Activated CD4-positive, alpha-beta T cell treated with anti-CD3 and anti-CD28 coated beads for 36 hours (primary cell): ENCODE measurements at regions of chr1 and their contacts with region 1.

Region 1: DNA sequence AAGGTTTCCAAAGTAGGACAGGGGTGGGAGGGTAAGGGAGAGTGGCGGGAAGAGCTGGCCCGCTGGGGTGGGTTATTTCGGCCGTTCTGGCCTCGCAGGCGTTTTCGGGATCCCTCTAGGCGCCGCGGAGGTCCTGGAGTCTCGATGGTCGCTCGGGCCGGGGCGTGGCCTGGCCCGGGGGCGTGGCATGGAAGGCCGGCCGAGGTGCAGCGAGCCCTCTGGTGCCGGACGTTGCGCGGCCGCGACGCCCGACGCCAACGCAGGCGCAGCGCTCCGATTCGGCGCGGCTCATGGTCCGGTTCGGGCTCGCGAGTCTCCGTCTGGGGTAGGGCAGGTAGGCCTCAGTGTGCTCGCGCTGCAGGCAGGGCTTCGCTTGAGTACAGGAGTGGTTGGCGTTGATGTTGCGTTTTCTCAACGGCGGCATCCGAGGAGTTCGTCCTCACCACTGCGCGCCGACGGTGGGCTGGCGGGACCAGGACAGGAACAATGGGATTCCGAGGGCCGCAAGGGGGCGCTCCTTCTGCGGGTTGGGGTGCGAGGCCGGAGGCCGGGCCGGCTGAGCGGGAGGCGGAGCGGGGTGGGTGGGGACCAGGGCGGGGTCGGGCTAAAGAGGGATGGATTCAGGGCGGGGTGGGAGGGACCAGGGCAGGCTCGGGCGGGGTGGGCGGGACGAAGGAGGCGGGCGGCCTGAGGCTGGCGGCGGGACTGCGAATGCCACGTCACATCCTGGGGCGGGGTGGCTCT is at the start of gene PGBD2:
- DNase-seq: peak; percentile 98
- ATAC-seq: peak; percentile 87
- H3K4me3 Mint-ChIP-seq: peak within 1 kb of the TSS; percentile 79
- H3K27ac Mint-ChIP-seq: peak within 1 kb of the TSS; percentile 98
- H3K4me1 Mint-ChIP-seq: peaks cover 8% of the 10 kb centered on the region
- H3K27me3 Mint-ChIP-seq: no peaks in the 10 kb centered on the region
- total RNA-seq, gene PGBD2: 2.3 to 2.9 TPM

Region 2: GRCh38 chr1:248065071-248065470 is 841.1 kb before region 1 on chr1:
- CTCF ChIA-PET with region 1: no interaction called
- POLR2A ChIA-PET with region 1: no interaction called
- intact Hi-C with region 1: no loop called
- DNase-seq: no peak
- ATAC-seq: no peak
- H3K4me3 Mint-ChIP-seq: no peak overlapping the region
- H3K27ac Mint-ChIP-seq: no peak overlapping the region
- H3K4me1 Mint-ChIP-seq: no peaks in the 10 kb centered on the region
- H3K27me3 Mint-ChIP-seq: no peaks in the 10 kb centered on the region

Region 3: DNA sequence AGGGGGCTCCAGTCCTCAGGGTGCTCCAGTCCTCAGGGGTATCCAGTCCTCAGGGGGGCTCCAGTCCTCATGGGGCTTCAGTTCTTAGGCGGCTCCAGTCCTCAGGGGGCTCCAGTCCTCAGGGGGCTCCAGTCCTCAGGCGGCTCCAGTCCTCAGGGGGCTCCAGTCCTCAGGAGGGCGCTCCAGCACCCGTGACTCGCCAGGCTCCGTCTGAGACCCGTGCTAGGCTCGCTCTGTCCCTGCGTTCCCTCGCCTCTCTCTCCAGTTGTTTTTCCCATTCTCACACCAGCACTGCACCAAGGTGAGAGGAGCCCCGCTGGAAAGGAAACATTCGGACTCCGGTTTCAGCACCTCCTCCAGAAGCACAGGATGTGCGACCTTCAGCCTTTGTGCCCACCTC is 741.0 kb before region 1 on chr1:
- CTCF ChIA-PET with region 1: no interaction called
- POLR2A ChIA-PET with region 1: no interaction called
- intact Hi-C with region 1: no loop called
- DNase-seq: no peak
- ATAC-seq: no peak
- H3K4me3 Mint-ChIP-seq: no peak overlapping the region
- H3K27ac Mint-ChIP-seq: no peak overlapping the region
- H3K4me1 Mint-ChIP-seq: no peaks in the 10 kb centered on the region
- H3K27me3 Mint-ChIP-seq: no peaks in the 10 kb centered on the region

Region 4: DNA sequence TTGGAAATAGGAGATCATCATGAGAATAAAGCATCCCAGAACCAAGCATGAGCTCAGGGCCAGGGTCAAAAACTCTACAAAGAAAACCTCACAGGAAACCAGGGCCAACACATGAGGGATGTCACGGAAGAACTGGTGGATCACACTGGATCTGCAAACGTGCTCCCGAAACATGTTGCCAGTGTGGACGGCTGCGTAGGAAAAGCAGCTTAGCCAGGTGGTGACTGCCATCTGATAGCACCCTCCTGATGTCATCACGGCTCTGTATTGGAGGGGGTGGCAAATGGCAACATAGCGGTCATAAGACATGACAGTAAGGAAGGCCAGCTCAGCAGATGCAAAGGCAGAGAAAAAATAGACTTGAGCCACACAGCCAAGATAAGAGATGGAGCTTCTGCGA is 224.5 kb before region 1 on chr1:
- CTCF ChIA-PET with region 1: no interaction called
- POLR2A ChIA-PET with region 1: no interaction called
- intact Hi-C with region 1: no loop called
- DNase-seq: no peak
- ATAC-seq: no peak
- H3K4me3 Mint-ChIP-seq: no peak overlapping the region
- H3K27ac Mint-ChIP-seq: no peak overlapping the region
- H3K4me1 Mint-ChIP-seq: peaks cover under 1% of the 10 kb centered on the region
- H3K27me3 Mint-ChIP-seq: peaks cover 13% of the 10 kb centered on the region

Region 5: GRCh38 chr1:248825909-248826760 is 80.0 kb before region 1 on chr1 and contains the start of gene SH3BP5L:
- CTCF ChIA-PET with region 1: no interaction called
- POLR2A ChIA-PET with region 1: interaction called, 3 read pairs
- intact Hi-C with region 1: loop called (anchors 1 kb)
- DNase-seq: peak; percentile 95
- ATAC-seq: peak; percentile 92
- H3K4me3 Mint-ChIP-seq: peak within 1 kb of the TSS; percentile 85
- H3K27ac Mint-ChIP-seq: peak within 1 kb of the TSS; percentile 99
- H3K4me1 Mint-ChIP-seq: peaks cover 53% of the 10 kb centered on the region
- H3K27me3 Mint-ChIP-seq: no peaks in the 10 kb centered on the region
- total RNA-seq, gene SH3BP5L: 20.1 to 21.3 TPM

Region 6: DNA sequence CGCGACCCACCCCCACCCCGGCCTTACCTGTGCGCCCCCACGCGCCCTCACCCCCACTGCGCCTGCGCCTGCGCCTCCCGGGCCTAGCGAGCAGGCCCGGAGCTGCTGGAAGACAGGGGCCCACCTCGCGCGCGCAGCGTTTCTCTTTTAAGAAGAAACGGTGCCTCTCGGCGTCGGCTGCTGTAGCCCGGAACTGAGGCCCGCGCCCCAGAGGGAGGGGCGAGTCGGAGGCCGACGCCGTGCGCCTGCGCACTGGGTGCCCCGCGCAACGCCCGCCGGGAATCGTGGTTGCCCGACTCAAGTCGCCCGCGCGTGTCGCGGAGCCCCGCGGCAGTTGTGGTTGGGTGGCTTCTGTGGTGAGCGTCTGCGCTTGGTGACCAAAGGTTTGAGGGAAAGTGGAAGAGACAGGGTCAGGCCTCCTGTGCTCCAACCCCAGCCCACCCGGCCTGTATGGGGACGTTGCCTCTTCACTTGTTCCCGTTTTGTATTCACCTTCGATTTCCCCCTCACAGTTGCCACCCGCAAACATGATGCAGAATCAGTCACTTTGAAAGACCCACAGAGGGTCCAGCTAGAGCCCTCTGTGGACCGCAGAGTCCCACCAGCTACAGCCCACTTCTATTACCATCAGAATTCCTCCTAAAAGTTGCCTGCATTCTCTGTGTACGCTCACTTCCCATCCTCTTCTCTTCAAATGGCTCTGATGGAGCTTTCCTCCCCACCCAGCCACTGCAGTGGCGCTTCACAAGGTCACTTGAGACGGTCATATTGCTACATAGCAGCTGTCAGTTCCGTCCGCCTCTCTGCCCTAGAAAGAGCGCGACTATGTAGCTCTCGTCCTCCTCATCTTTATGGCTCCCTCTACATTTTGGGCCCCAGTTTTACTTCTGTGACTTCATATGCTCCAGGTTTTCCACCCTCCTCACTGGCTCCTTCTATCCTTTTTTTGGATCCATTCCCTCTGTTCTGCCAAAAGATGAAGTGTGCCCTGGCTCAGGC is 47.0 kb before region 1 on chr1 and contains the start of gene ZNF692:
- CTCF ChIA-PET with region 1: interaction called, 3 read pairs
- POLR2A ChIA-PET with region 1: no interaction called
- intact Hi-C with region 1: loop called (anchors 1 to 2 kb)
- DNase-seq: peak; percentile 99
- ATAC-seq: peak; percentile 86
- H3K4me3 Mint-ChIP-seq: peak within 1 kb of the TSS; percentile 89
- H3K27ac Mint-ChIP-seq: peak within 1 kb of the TSS; percentile 99
- H3K4me1 Mint-ChIP-seq: peaks cover 55% of the 10 kb centered on the region
- H3K27me3 Mint-ChIP-seq: no peaks in the 10 kb centered on the region
- total RNA-seq, gene ZNF692: 75.9 to 92.3 TPM

Region 7: DNA sequence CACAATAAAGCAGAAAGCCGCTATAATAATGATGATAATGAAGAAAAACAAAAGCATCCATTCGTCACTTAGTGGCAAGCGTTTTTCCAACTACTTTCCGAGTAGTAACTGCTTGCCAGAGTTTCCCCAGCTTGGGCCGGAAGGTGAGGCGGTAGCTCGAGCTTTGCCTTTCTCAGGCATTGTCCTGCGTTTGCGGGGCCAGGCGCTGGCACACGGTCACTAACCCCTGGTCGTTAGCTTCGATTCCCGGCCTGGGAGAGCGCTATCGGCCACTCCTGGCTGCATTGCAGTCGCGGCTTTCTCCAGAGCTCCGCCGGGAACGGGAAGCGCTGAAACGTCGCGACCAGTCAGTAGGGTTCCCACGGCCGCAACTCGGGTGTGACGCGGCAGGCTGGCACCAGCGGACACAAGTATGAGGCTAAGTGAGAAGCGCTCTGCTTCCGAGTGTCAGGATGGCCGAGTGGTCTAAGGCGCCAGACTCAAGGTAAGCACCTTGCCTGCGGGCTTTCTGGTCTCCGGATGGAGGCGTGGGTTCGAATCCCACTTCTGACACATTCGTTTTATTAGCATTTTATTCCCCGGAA is 32.7 kb before region 1 on chr1:
- CTCF ChIA-PET with region 1: interaction called, 4 read pairs
- POLR2A ChIA-PET with region 1: no interaction called
- intact Hi-C with region 1: loop called (anchors 1 kb)
- DNase-seq: peak; percentile 95
- ATAC-seq: peak; percentile 83
- H3K4me3 Mint-ChIP-seq: peak overlapping the region; percentile 87
- H3K27ac Mint-ChIP-seq: peak overlapping the region; percentile 94
- H3K4me1 Mint-ChIP-seq: peaks cover 25% of the 10 kb centered on the region
- H3K27me3 Mint-ChIP-seq: no peaks in the 10 kb centered on the region

Region 8: DNA sequence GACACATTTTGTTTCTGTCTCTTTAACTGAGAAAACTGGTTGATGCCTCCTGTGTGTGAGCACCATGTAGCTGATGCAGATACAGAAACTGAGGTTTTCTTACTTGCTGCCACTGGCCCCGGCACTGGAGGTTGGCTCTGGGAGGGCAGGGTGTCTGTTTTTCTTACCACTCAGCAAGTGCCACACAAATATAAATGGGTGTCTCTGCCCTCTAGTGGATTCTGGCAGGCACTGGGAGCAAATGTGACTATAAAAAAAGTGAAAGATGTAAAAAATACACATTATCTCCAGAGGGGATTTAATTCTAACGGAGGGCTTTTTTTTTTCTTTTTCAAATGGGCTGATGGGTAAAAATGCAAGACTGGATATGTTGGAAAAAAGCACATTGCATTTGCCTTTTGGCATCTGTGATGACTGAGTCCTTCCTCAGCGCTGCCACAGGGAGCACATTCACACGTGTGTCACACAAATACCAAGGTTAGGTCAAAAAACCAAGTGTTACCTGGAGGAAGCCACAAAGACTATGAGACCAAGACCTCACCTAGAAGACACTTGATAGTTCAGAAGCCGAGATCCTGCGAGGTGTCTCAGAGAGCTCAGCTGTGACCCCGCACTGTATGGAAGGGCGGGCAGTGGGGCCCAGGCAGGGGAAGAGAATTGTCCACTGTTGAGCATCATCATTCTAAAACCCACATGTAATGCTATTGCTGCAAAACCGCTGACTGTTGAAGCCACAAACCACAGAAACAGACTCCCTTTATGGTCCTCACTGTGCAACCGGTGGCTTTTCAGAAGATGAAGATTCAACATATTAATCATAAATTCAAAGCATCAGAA is 18.7 kb after region 1 on chr1:
- CTCF ChIA-PET with region 1: interaction called, 4 read pairs
- POLR2A ChIA-PET with region 1: no interaction called
- intact Hi-C with region 1: loop called (anchors 1 kb)
- DNase-seq: peak; percentile 75
- ATAC-seq: peak; percentile 97
- H3K4me3 Mint-ChIP-seq: no peak overlapping the region
- H3K27ac Mint-ChIP-seq: peak overlapping the region; percentile 20
- H3K4me1 Mint-ChIP-seq: peaks cover 19% of the 10 kb centered on the region
- H3K27me3 Mint-ChIP-seq: peaks cover 3% of the 10 kb centered on the region